Gastrocnemius medialis (tissue), 4 donors: ENCODE measurements at regions of chr9 and their contacts with region 1.

Region 1: DNA sequence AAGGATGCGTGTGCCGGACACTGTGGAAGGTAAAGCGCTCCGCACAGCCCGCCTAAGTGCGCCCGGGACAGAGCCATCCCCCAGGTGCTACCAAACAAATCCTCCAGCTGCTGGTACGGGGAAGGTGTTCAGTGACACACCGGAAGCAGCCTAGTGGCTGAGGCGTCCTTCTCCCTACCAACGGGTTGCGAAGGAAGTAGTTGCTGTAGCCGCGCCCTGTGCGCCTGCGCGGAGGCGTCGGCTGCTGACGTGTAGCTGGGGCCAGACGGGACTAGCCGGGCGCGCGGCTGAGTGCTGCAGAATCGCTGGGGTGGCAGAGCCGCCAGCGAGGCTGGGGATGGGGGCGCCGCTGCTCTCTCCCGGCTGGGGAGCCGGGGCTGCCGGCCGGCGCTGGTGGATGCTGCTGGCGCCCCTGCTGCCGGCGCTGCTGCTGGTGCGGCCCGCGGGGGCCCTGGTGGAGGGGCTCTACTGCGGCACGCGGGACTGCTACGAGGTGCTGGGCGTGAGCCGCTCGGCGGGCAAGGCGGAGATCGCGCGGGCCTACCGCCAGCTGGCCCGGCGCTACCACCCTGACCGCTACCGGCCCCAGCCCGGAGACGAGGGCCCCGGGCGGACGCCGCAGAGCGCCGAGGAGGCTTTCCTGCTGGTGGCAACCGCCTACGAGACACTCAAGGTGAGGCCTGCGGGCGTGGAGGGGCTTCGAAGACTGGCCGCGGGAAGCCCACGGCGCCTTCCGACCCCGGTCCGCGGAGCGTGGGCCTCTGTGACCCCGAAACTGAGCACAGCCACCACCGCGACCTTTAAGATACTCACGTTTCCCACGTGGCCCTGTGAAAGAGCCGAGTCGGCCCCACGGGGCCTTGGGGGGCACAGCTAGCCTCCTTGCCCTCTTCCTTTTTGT is at the start of gene DNAJC25:
- DNase-seq: peak; percentile 95 to 97
- ATAC-seq: peak; percentile 98 to 99
- H3K4me3 ChIP-seq: peak within 1 kb of the TSS; percentile 78 to 90 (median 90)
- H3K27ac ChIP-seq: peak within 1 kb of the TSS; percentile 92 to 94 (median 93)
- H3K4me1 ChIP-seq: peaks cover 30 to 41% of the 10 kb centered on the region in 2 donors
- H3K27me3 ChIP-seq: no peaks in the 10 kb centered on the region
- CTCF ChIP-seq: peak in 2 of 5 experiments; percentile 22 to 23
- POLR2A ChIP-seq: peak; percentile 100
- total RNA-seq, gene DNAJC25: 3.7 to 7.4 (median 4.9) TPM

Region 2: GRCh38 chr9:110864021-110864420 is 767.3 kb before region 1 on chr9:
- in situ Hi-C with region 1: no loop called
- intact Hi-C with region 1: no loop called
- DNase-seq: no peak
- ATAC-seq: no peak
- H3K4me3 ChIP-seq: no peak overlapping the region
- H3K27ac ChIP-seq: no peak overlapping the region
- H3K4me1 ChIP-seq: no peaks in the 10 kb centered on the region
- H3K27me3 ChIP-seq: no peaks in the 10 kb centered on the region
- CTCF ChIP-seq: no peak
- POLR2A ChIP-seq: no peak

Region 3: DNA sequence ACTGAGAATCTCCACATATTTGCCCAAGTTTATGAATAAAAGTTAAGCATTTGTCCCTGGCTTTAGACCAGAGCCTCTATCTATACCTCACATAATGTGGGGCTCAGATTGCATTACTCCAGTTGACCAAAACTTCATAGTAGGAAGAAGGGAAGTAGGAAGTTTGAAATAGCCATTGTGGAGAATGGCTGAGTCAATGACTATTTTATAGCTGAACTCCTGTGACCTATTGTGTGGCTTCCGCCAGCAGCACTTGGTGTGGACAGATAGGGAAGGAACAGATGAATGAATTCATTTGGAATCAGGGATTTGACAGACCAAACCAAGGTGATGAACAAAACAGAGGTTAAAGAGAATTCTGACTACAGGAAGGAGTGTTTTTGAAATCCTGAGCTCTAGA is 500.1 kb before region 1 on chr9:
- in situ Hi-C with region 1: no loop called
- intact Hi-C with region 1: no loop called
- DNase-seq: no peak
- ATAC-seq: no peak
- H3K4me3 ChIP-seq: no peak overlapping the region
- H3K27ac ChIP-seq: no peak overlapping the region
- H3K4me1 ChIP-seq: no peaks in the 10 kb centered on the region
- H3K27me3 ChIP-seq: no peaks in the 10 kb centered on the region
- CTCF ChIP-seq: no peak
- POLR2A ChIP-seq: no peak

Region 4: DNA sequence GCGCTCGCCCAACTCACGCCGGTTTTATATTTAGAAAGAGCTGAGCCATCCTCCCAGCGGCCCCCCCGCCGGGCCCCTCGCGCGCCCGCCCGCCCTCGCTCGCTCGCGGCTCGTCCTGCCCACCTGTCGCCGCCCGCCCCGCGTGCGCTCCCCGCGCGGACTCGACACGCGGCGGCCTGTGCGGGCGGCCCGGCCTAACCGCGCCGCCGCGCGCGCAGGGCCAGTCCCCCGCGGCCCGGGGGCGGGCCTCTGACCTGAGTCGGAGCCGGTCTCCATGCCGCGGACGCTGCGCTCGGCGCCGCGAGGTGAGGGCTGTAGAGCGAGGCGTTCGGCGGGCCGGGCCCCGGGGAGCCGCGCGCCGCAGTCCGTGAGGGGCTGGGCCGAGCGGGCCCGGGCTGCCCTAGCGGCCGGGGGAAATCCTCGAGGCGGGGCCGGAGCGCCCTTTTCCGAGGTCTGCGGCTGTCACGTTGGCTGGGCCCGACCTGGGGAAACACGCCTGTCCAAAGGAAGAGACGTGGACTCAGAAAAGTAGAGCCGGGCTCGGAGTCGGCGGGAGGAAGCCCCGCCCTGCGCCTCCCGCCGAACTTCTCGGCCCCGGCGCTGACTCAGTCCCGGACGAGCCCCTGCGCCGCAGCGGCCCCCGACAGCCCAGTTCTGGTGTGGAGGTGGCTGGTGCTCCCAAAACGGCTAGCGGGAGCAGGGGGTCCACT is 147.3 kb before region 1 on chr9 and contains the start of gene ECPAS:
- in situ Hi-C with region 1: no loop called
- intact Hi-C with region 1: loop called (anchors 10 kb)
- DNase-seq: peak; percentile 65 to 85
- ATAC-seq: peak; percentile 51 to 63
- H3K4me3 ChIP-seq: peak within 1 kb of the TSS; percentile 81 to 94 (median 88)
- H3K27ac ChIP-seq: peak within 1 kb of the TSS; percentile 95 to 99 (median 98)
- H3K4me1 ChIP-seq: peaks cover 36 to 37% of the 10 kb centered on the region in 2 donors
- H3K27me3 ChIP-seq: no peaks in the 10 kb centered on the region
- CTCF ChIP-seq: peak in 4 of 5 experiments; percentile 9 to 36 (median 15)
- POLR2A ChIP-seq: peak; percentile 71 to 75
- total RNA-seq, gene ECPAS: 320 to 509 (median 424) TPM

Region 5: DNA sequence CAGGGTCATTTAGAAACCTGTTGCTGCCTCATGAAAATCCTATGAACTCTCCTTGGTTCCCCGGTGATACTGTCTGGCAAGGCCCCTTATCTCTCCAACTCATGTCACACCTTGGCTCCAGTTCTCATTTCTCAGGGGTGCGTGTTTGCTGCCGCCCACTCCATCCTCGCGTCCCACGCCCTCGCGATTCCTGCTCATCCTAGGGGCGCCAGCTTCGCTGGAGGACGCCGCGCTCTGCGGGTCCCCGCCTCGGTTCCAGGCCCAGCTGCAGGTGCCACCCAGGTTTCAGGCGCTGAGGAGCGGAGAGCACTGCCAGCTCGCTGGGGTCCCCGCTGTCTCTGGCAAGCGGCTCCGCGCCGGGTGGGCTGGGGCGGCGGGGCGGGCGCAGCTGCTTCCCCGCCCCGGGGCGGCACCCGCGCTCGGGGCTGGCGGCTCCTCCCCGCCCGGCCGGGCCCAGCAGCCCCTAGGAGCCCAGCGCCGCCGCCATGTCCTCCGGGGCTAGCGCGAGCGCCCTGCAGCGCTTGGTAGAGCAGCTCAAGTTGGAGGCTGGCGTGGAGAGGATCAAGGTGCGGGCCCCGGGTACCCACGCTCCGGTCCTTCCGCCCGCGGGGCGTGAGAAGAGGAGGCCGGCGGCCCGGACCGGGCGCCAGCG is 30.0 kb after region 1 on chr9 and contains the start of gene GNG10:
- in situ Hi-C with region 1: no loop called
- intact Hi-C with region 1: loop called (anchors 1 kb)
- DNase-seq: peak in 1 of 2 donors; percentile 13
- ATAC-seq: peak; percentile 81
- H3K4me3 ChIP-seq: peak within 1 kb of the TSS; percentile 64 to 87 (median 73)
- H3K27ac ChIP-seq: peak within 1 kb of the TSS; percentile 20 to 67 (median 59)
- H3K4me1 ChIP-seq: peaks cover 11 to 12% of the 10 kb centered on the region in 2 donors
- H3K27me3 ChIP-seq: no peaks in the 10 kb centered on the region
- CTCF ChIP-seq: no peak
- POLR2A ChIP-seq: peak in 1 of 2 donors; percentile 24
- total RNA-seq, gene GNG10: 14.9 to 27.2 (median 18.3) TPM

Region 6: GRCh38 chr9:111759762-111760639 is 128.7 kb after region 1 on chr9:
- in situ Hi-C with region 1: no loop called
- intact Hi-C with region 1: no loop called
- DNase-seq: no peak
- ATAC-seq: peak; percentile 89 to 90
- H3K4me3 ChIP-seq: no peak overlapping the region
- H3K27ac ChIP-seq: no peak overlapping the region
- H3K4me1 ChIP-seq: peaks cover 0 to 4% of the 10 kb centered on the region in 2 donors
- H3K27me3 ChIP-seq: no peaks in the 10 kb centered on the region
- CTCF ChIP-seq: peak; percentile 31 to 75 (median 59)
- POLR2A ChIP-seq: no peak

Region 7: DNA sequence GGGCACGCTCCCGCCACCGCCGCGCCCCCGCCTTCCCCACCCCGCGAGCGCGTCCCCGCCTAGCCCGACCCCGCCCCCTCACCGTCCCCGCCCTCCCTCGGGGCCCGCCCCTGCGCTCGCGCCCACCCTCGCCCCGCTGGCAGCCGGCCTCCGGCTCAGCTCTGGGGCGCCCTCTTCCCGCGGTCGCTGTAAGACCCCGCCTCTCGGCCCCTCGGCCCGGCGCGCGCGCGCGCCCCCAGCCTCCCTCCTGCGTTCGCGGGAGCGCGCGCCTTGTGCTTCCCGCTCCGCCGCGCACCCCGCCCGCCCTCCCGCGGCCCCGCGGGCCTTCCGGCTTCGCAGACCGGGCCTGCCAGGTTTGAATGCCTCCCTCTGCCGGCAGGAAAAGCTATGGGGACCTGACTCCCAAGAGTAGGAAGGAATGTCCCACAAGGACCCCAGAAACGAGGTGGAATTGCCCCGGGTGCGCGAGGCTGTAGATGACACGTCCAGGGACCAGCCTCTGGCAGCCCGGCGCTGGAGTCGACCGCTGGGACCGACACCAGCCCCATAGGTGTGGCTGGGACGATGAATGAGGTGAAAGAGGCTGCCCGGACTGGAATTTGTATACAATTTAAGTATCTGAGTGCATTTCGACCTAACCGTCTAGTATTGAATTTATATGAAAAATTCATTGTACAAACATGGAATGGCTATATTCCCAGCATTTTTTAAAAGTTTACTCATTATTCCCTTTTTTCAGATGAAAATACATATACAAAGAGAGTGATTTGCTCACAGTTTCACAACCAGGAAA is 702.5 kb after region 1 on chr9:
- in situ Hi-C with region 1: no loop called
- intact Hi-C with region 1: loop called (anchors 10 kb)
- DNase-seq: peak; percentile 84 to 91
- ATAC-seq: peak; percentile 89
- H3K4me3 ChIP-seq: peak overlapping the region; percentile 67 to 96 (median 88)
- H3K27ac ChIP-seq: peak overlapping the region; percentile 84 to 99 (median 97)
- H3K4me1 ChIP-seq: peaks cover 9 to 16% of the 10 kb centered on the region in 2 donors
- H3K27me3 ChIP-seq: no peaks in the 10 kb centered on the region
- CTCF ChIP-seq: peak; percentile 45 to 78 (median 57)
- POLR2A ChIP-seq: no peak

Region 8: GRCh38 chr9:112750111-112750767 is 1118.9 kb after region 1 on chr9 and contains the start of gene SNX30:
- in situ Hi-C with region 1: no loop called
- intact Hi-C with region 1: loop called (anchors 10 kb)
- DNase-seq: peak; percentile 81 to 89
- ATAC-seq: peak; percentile 91 to 93
- H3K4me3 ChIP-seq: peak within 1 kb of the TSS; percentile 73 to 95 (median 80)
- H3K27ac ChIP-seq: peak within 1 kb of the TSS; percentile 75 to 83 (median 80)
- H3K4me1 ChIP-seq: peaks cover 7 to 13% of the 10 kb centered on the region in 2 donors
- H3K27me3 ChIP-seq: no peaks in the 10 kb centered on the region
- CTCF ChIP-seq: peak in 1 of 5 experiments; percentile 20
- POLR2A ChIP-seq: peak; percentile 44 to 48
- total RNA-seq, gene SNX30: 2.3 to 6.1 (median 3.9) TPM